ENCODE measurements at regions of chr2 and their contacts with region 1.

Region 1: GRCh38 chr2:130824492-130825061 is 12.1 kb upstream of the ARHGEF4 start:
- DNase-seq: no peak
- H3K4me3 ChIP-seq: no peak overlapping the region
- H3K27ac ChIP-seq: peak overlapping the region in 1 of 2 experiments; percentile 41; a peak in 1 of 4 replicates
- H3K4me1 ChIP-seq: peaks cover 4 to 12% of the 10 kb centered on the region in 2 experiments; a peak in 2 of 4 replicates
- H3K27me3 ChIP-seq: no peaks in the 10 kb centered on the region
- CTCF ChIP-seq: no peak
- EP300 ChIP-seq: no peak
- RAD21 ChIP-seq: no peak

Region 2: DNA sequence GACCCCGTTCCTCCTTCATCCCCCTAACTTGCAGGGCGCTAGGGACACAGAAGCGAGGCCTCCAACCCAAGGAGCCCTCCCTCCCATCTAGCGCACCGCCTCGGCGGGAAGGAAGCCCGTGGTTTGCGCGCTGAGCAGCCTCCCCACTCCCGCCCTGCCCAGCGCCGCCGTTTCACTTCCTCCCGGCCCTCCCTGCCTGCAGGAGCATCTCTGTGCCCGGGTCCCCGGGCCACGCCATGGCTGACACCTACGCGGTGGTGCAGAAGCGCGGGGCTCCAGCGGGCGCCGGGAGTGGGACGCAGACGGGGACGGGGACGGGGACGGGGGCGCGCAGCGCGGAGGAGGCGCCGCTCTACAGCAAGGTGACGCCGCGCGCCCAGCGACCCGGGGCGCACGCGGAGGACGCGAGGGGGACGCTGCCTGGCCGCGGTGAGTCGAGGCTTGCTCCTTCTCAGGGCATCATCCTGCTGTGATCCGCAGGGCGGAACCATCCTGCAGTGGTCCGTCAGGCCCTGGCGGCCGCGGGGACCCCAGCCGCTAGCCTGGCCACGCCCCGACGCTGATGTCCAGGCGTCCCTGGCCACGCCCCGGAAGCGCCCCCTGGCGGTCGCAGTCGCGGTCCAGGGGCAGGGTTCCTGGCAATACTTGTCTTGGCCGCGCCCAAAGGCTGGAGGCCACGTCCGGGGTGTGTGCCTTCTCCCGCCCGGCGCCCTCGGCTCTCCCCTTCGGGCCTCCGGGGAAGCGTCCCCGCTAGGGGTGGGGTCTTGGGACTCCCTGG is 452.3 kb before region 1 on chr2:
- CTCF ChIA-PET with region 1: no interaction called
- POLR2A ChIA-PET with region 1: no interaction called
- DNase-seq: peak; percentile 98
- H3K4me3 ChIP-seq: peak overlapping the region; percentile 87 to 99
- H3K27ac ChIP-seq: peak overlapping the region; percentile 52 to 91
- H3K4me1 ChIP-seq: peaks cover 0 to 18% of the 10 kb centered on the region in 2 experiments; a peak in 1 of 4 replicates
- H3K27me3 ChIP-seq: no peaks in the 10 kb centered on the region
- CTCF ChIP-seq: peak; percentile 77
- EP300 ChIP-seq: no peak
- RAD21 ChIP-seq: peak; percentile 51

Region 3: DNA sequence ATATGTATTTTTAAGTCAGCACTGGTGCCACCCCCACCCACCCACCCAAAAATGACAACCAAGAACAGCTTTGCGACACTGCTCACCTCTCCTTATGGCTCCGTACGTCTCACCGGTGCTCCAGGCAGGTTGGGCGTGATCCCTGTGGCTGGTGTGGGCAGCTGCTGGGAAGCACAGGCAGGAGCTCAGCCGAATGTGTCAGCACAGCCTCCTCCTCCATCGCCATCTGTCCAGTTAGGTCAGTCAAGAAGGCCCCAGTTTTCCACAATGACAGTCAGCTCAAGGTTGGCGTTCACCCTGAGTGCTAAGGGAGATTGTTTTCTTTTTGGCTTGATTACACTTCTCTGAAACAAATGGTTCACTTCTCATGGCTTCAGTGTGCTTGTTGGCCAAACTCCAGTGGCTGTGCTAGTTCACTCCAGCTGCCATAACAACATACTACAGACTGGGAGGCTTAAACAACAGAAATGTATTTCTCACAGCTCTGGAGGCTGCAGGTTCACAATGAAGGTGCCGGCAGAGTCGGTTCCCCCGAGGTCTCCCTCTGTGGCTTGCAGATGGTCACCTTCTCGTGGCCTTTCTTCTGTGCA is 39.0 kb before region 1 on chr2:
- CTCF ChIA-PET with region 1: no interaction called
- POLR2A ChIA-PET with region 1: no interaction called
- DNase-seq: no peak
- H3K4me3 ChIP-seq: no peak overlapping the region
- H3K27ac ChIP-seq: no peak overlapping the region
- H3K4me1 ChIP-seq: no peaks in the 10 kb centered on the region
- H3K27me3 ChIP-seq: no peaks in the 10 kb centered on the region
- CTCF ChIP-seq: no peak
- EP300 ChIP-seq: no peak
- RAD21 ChIP-seq: no peak

Region 4: DNA sequence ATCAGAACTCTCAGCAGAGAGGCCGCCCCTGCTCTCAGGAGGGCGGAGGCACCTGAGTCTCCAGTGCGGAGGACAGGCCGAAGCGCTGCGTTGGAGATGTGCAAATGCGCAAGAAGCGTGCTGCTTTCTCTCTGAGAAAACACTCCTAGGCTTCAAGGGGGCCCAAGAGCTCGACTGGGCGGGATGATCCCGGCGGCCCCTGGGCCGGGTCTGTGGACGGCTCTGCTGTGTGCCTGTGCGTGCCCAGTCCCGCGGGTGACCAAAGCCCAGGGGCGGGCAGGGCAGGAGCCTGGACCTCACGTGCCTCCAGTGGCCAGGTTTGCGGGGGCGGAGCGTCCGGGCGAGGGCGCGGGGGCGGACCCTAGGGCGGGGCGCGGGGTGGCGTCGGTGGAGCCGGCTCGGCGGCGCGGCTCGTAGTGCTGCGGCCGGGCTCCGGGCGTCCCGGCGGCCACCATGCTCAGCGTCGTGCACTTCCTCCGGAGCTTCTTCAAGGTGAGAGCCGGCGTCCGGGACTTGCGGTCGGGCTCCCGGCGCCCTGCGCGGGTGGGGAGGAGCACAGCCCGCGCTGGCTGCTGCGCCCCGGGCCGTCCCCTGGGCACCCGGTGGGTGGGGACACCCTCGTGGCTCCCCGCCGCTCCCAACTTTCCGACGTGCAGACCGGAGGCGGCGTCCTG is 12.1 kb after region 1 on chr2 and contains the start of gene ARHGEF4:
- CTCF ChIA-PET with region 1: interaction called, 10 read pairs
- POLR2A ChIA-PET with region 1: no interaction called
- DNase-seq: peak; percentile 89
- H3K4me3 ChIP-seq: peak within 1 kb of the TSS in 1 of 2 experiments; percentile 34; a peak in 2 of 4 replicates
- H3K27ac ChIP-seq: no peak within 1 kb of the TSS
- H3K4me1 ChIP-seq: no peaks in the 10 kb centered on the region
- H3K27me3 ChIP-seq: no peaks in the 10 kb centered on the region; the same call in 1 of the 2 replicates
- CTCF ChIP-seq: no peak
- EP300 ChIP-seq: no peak
- RAD21 ChIP-seq: no peak
- polyA plus RNA-seq, gene ARHGEF4: 1.5 and 2.3 TPM in 2 replicates

Measured in SK-N-SH (cell line).